ENCODE measurements at regions of chr4 and their contacts with region 1.

Region 1: DNA sequence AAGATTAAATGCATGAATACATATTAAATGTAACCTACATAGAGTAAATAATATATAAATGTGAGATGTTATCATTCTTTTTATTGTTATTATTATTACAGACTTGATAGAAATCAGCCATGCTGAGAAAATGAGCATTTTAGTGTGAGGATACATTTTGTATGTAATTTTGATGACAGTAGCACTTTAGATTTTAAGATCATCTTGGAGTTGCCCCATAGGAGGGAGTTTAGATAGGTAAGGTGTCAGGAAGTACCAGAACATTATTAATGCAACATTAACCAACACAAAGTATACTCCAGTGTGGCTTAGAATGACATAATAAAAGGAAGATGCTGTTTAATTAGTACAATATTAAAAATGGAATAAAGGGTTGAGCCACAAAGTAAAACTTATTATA is 8.4 kb downstream of the TMPRSS11A start:
- DNase-seq: no peak
- H3K4me3 Mint-ChIP-seq: no peak overlapping the region
- H3K27ac Mint-ChIP-seq: no peak overlapping the region
- H3K4me1 Mint-ChIP-seq: no peaks in the 10 kb centered on the region
- H3K27me3 Mint-ChIP-seq: no peaks in the 10 kb centered on the region
- CTCF ChIP-seq: no peak

Region 2: GRCh38 chr4:67983333-67983732 is 28.4 kb after region 1 on chr4:
- CTCF ChIA-PET with region 1: no interaction called
- intact Hi-C with region 1: loop called (anchors 1 kb)
- DNase-seq: no peak
- H3K4me3 Mint-ChIP-seq: no peak overlapping the region
- H3K27ac Mint-ChIP-seq: no peak overlapping the region
- H3K4me1 Mint-ChIP-seq: no peaks in the 10 kb centered on the region
- H3K27me3 Mint-ChIP-seq: peaks cover 17% of the 10 kb centered on the region
- CTCF ChIP-seq: no peak